ENCODE measurements at regions of chr17 and their contacts with region 1.

Region 1: GRCh38 chr17:40531051-40531991 is 29.9 kb upstream of the TNS4 start:
- DNase-seq: peak; percentile 60

Region 2: DNA sequence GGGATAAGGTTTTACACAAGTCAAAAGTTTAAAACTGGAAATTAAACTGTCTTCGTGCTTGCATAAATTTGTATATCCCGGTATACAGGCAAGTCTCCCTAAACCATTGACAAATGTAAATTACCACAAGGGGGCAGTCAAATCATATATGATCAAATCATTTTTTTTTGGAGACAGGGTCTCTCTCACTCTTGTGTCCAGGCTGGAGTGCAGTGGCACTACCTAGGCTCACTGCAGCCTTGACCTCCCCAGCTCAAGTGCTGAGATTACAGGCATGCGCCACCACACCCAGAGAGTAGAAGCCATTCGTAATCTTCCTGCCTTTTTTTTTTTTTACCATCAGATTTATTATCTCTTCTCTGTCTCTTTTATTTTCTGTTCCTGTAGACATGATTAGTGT is 132.1 kb before region 1 on chr17:
- intact Hi-C with region 1: loop called (anchors 1 kb)
- DNase-seq: no peak

Region 3: DNA sequence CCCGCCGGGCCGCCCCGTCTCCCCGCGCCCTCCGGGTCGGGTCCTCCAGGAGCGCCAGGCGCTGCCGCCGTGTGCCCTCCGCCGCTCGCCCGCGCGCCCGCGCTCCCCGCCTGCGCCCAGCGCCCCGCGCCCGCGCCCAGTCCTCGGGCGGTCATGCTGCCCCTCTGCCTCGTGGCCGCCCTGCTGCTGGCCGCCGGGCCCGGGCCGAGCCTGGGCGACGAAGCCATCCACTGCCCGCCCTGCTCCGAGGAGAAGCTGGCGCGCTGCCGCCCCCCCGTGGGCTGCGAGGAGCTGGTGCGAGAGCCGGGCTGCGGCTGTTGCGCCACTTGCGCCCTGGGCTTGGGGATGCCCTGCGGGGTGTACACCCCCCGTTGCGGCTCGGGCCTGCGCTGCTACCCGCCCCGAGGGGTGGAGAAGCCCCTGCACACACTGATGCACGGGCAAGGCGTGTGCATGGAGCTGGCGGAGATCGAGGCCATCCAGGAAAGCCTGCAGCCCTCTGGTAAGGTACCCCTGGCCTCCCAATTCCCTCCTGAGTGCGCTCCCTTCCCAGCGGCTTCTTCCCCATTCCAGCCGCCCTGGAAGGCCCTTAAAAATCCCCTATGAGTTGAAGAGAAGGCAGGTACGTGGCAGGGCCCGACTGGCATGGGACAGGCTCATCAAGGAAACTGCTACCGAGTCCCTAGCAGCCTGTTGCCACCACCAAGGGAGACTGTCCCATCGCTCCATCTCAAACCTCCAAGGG is 87.6 kb before region 1 on chr17:
- intact Hi-C with region 1: loop called (anchors 2 kb)
- DNase-seq: peak; percentile 85